Activated T-helper 1 cell treated with anti-CD3 and anti-CD28 coated beads, Interleukin-12 subunit alpha, Interleukin-12 subunit beta, Interleukin-2, Interleukin-4 antibody, amounts not matched to agents 30 ng/mL and 10 ng/mL and 1 ng/mL, durations not matched to agents 14 hours and 24 hours and 36 hours (primary cell): ENCODE measurements at regions of chr7 and their contacts with region 1.

Region 1: GRCh38 chr7:17706734-17707133 is 233.6 kb downstream of the SNX13 start:
- DNase-seq: no peak
- H3K4me3 Mint-ChIP-seq: no peak overlapping the region
- H3K27ac Mint-ChIP-seq: no peak overlapping the region
- H3K4me1 Mint-ChIP-seq: no peaks in the 10 kb centered on the region
- H3K27me3 Mint-ChIP-seq: peaks cover 8% of the 10 kb centered on the region

Region 2: DNA sequence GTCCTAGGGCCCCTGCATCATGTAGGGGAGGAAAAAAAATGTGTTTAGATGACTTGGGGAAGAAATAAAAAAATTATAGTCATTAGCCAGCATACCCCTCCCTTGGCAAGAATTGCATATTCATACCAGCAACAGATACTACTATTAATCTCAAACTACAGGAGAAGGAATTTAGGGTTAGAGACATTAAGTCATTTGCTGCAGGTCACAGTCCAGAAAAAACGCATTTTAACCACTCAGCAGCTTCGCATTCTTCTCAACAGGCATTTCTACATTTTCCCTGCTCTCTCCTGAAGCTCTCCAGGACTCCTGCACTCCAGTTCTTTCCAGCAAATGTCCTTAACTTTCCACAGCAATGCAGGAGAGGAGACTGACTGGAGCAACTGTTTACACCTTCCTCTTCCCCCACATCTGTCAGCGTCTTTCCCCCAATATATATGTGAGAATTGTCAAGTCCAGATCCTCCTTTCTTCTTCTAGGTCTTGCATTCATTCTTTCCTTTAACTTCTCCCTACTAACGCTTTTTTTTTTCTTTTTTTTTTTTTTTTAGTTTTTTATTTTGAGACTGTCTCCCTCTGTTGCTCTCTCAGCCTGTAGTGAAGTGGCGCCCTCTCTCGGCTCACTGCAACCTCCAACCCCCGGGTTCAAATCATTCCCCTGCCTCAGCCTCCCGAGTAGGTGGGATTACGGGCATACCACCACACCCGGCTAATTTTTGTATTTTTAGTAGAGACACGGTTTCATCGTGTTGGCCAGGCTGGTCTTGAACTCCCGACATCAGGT is 285.3 kb after region 1 on chr7:
- intact Hi-C with region 1: loop called (anchors 10 kb)
- DNase-seq: no peak
- H3K4me3 Mint-ChIP-seq: no peak overlapping the region
- H3K27ac Mint-ChIP-seq: no peak overlapping the region
- H3K4me1 Mint-ChIP-seq: no peaks in the 10 kb centered on the region
- H3K27me3 Mint-ChIP-seq: peaks cover 3% of the 10 kb centered on the region